CD4-positive, alpha-beta T cell (primary cell): ENCODE measurements at regions of chr12 and their contacts with region 1.

Region 1: DNA sequence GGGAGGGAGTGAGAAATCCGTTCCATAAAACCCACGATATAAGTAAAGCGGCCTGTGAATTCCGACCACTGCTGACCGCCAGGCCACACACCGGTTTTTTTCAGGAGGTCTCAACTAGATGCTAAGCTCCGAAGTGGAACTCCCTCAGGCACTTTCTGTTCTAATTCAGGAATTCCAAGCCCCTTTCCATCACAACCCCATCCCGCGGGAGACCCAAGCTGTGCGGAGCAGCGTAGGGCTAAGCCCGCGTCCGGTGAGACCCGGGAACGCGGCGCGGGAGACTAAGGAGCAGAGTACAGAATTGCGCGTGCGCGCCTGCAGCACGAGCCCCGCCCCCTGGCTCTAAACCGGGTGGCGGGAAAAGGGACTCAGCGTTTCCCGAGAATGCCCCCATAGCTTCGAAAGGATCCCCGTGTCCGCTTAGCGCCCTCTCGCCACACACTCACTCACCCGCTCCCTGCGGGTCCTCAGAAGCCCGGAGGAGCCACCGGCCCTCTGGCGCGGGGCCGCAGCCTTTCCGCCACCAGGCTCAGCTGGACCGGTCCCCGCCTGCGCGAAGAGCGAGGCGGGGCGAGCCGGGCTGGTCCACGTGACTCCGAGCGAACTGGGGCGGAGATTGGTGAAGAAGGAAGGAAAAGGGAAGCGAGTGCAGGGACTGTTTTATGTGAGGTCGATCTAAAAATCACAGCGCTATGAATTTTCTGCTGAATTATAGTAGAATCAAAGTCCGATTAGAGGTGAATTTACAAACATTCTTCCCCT is at the start of gene TIMELESS:
- DNase-seq: peak; percentile 62 to 93 (median 78)
- ATAC-seq: peak; percentile 96
- H3K4me3 ChIP-seq: peak within 1 kb of the TSS; percentile 70
- H3K4me3 Mint-ChIP-seq: peak within 1 kb of the TSS; percentile 93
- H3K27ac ChIP-seq: peak within 1 kb of the TSS; percentile 25 to 77
- H3K27ac Mint-ChIP-seq: peak within 1 kb of the TSS; percentile 92
- H3K4me1 ChIP-seq: peaks cover 12% of the 10 kb centered on the region
- H3K4me1 Mint-ChIP-seq: peaks cover 21% of the 10 kb centered on the region
- H3K27me3 ChIP-seq: no peaks in the 10 kb centered on the region
- H3K27me3 Mint-ChIP-seq: no peaks in the 10 kb centered on the region
- CTCF ChIP-seq: no peak
- total RNA-seq, gene TIMELESS: 3.0 to 3.1 TPM

Region 2: GRCh38 chr12:55789171-55789570 is 659.9 kb before region 1 on chr12:
- CTCF ChIA-PET with region 1: no interaction called
- POLR2A ChIA-PET with region 1: no interaction called
- intact Hi-C with region 1: no loop called
- DNase-seq: no peak
- ATAC-seq: no peak
- H3K4me3 ChIP-seq: no peak overlapping the region
- H3K4me3 Mint-ChIP-seq: no peak overlapping the region
- H3K27ac ChIP-seq: no peak overlapping the region
- H3K27ac Mint-ChIP-seq: no peak overlapping the region
- H3K4me1 ChIP-seq: no peaks in the 10 kb centered on the region
- H3K4me1 Mint-ChIP-seq: no peaks in the 10 kb centered on the region
- H3K27me3 ChIP-seq: no peaks in the 10 kb centered on the region
- H3K27me3 Mint-ChIP-seq: no peaks in the 10 kb centered on the region
- CTCF ChIP-seq: no peak

Region 3: DNA sequence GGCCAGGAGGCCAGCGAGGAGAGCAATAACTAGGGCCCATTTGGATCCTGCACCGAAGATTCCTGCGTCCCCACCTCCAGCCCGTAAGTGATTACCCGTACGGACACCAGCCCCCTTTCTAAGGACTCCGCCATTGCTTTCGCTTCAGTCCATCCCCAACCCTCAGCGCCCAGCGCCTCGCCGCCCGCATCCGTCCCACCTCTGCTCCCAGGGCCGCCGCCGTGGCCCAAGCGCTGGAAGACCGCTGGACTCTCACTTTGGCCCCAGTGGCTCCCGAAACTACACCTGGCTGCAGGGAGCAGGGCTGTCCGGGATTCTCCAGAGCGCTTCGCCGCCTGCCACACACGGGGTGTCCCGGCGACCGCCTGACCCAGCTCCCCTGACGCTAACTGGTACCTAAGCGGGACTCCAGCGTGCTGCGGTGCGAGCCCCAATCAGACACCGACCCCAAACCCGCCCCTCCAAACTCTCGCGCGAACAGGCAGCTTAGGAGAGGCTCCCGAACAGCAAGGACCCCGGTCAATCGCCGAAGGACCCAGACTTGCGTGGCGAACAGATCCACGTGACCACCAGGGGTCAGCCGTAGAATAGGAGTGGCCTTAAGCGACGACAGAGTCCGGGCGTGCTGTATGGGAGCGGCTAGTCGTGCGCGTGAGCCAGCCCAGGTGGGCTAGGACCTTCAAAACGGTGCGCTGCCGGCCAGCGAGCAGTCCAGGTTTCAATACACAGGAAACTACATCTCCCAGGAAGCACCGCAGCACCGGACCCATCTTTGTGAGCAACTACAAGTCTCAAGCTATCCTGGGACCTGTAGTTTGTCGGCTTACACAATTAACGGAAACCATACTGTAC is 133.2 kb before region 1 on chr12 and contains the start of gene CNPY2:
- CTCF ChIA-PET with region 1: no interaction called
- POLR2A ChIA-PET with region 1: interaction called, 13 read pairs
- intact Hi-C with region 1: no loop called
- DNase-seq: peak; percentile 86 to 96 (median 90)
- ATAC-seq: peak; percentile 93
- H3K4me3 ChIP-seq: peak within 1 kb of the TSS; percentile 100
- H3K4me3 Mint-ChIP-seq: peak within 1 kb of the TSS; percentile 99
- H3K27ac ChIP-seq: peak within 1 kb of the TSS; percentile 84 to 98
- H3K27ac Mint-ChIP-seq: peak within 1 kb of the TSS; percentile 98
- H3K4me1 ChIP-seq: peaks cover 17% of the 10 kb centered on the region
- H3K4me1 Mint-ChIP-seq: peaks cover 19% of the 10 kb centered on the region
- H3K27me3 ChIP-seq: no peaks in the 10 kb centered on the region
- H3K27me3 Mint-ChIP-seq: no peaks in the 10 kb centered on the region
- CTCF ChIP-seq: no peak
- total RNA-seq, gene CNPY2: 30.5 to 33.4 TPM

Region 4: GRCh38 chr12:56676851-56677580 is 228.0 kb after region 1 on chr12:
- CTCF ChIA-PET with region 1: no interaction called
- POLR2A ChIA-PET with region 1: no interaction called
- intact Hi-C with region 1: no loop called
- DNase-seq: peak in 2 of 14 experiments; percentile 11 to 35
- ATAC-seq: peak; percentile 54
- H3K4me3 ChIP-seq: no peak overlapping the region
- H3K4me3 Mint-ChIP-seq: no peak overlapping the region
- H3K27ac ChIP-seq: no peak overlapping the region
- H3K27ac Mint-ChIP-seq: peak overlapping the region; percentile 74
- H3K4me1 ChIP-seq: peaks cover 72% of the 10 kb centered on the region
- H3K4me1 Mint-ChIP-seq: peaks cover 58% of the 10 kb centered on the region
- H3K27me3 ChIP-seq: no peaks in the 10 kb centered on the region
- H3K27me3 Mint-ChIP-seq: no peaks in the 10 kb centered on the region
- CTCF ChIP-seq: no peak

Region 5: GRCh38 chr12:58007875-58008274 is 1558.8 kb after region 1 on chr12:
- CTCF ChIA-PET with region 1: no interaction called
- POLR2A ChIA-PET with region 1: no interaction called
- intact Hi-C with region 1: no loop called
- DNase-seq: no peak
- ATAC-seq: no peak
- H3K4me3 ChIP-seq: no peak overlapping the region
- H3K4me3 Mint-ChIP-seq: no peak overlapping the region
- H3K27ac ChIP-seq: no peak overlapping the region
- H3K27ac Mint-ChIP-seq: no peak overlapping the region
- H3K4me1 ChIP-seq: no peaks in the 10 kb centered on the region
- H3K4me1 Mint-ChIP-seq: no peaks in the 10 kb centered on the region
- H3K27me3 ChIP-seq: peaks cover 0 to 6% of the 10 kb centered on the region in 2 experiments
- H3K27me3 Mint-ChIP-seq: peaks cover 20% of the 10 kb centered on the region
- CTCF ChIP-seq: no peak